Psoas muscle (tissue), 8 donors: ENCODE measurements at regions of chr19 and their contacts with region 1.

Region 1: DNA sequence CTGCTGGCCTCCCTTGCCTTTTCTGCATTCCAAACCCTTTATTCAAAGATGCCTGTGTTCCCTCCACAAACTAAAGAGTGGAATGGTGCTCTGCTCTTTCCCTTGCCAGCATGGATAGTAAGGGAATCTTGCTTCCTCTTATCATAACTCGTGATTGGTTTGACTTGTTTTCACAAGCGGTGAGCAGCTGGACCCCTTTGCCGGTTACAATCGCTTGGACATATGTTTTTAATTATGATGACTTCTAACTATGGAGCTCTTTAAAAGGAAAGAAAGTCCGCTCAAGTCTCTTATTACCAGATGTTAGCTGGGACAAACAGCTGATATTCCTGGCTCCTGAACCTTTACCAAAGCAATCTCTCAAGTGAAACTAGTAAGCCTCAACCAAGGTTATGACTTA is 1094.7 kb downstream of the UQCRFS1 start:
- DNase-seq: no peak
- ATAC-seq: no peak
- H3K4me3 ChIP-seq: no peak overlapping the region
- H3K27ac ChIP-seq: no peak overlapping the region
- H3K4me1 ChIP-seq: no peaks in the 10 kb centered on the region
- H3K27me3 ChIP-seq: no peaks in the 10 kb centered on the region
- CTCF ChIP-seq: no peak

Region 2: GRCh38 chr19:28130066-28130511 is 11.9 kb after region 1 on chr19:
- intact Hi-C with region 1: loop called in 1 of 2 experiments (anchors 1 kb)
- DNase-seq: no peak
- ATAC-seq: no peak
- H3K4me3 ChIP-seq: no peak overlapping the region
- H3K27ac ChIP-seq: no peak overlapping the region
- H3K4me1 ChIP-seq: no peaks in the 10 kb centered on the region
- H3K27me3 ChIP-seq: peaks cover 0 to 2% (median 0%) of the 10 kb centered on the region in 3 donors
- CTCF ChIP-seq: no peak